IMR-90 (cell line): ENCODE measurements at regions of chr3 and their contacts with region 1.

Region 1: DNA sequence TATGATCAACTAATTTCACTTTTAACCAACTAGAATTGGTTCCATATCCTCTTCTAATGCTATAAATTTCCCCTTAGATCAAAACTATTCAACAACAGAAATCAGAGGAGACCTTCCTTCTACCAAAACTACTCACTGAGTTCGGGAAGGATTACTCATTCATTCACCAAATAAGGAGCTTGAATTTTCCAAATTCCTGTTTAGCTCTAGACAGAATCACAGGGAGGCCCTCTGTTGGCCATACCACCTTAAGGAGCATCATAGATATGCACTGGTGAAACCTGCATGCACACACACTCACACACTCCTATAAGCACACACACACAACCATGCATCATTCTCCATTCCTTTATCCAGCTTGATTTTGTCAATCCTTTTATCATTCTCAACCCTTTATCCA is 49.0 kb downstream of the SUCLG2 start:
- DNase-seq: peak; percentile 83
- ATAC-seq: peak; percentile 95
- H3K4me3 ChIP-seq: no peak overlapping the region
- H3K27ac ChIP-seq: no peak overlapping the region
- H3K4me1 ChIP-seq: no peaks in the 10 kb centered on the region; the same call in 1 of the 2 replicates
- H3K27me3 ChIP-seq: no peaks in the 10 kb centered on the region
- CTCF ChIP-seq: peak; percentile 57
- POLR2A ChIP-seq: no peak
- RAD21 ChIP-seq: peak; percentile 54

Region 2: GRCh38 chr3:67635257-67635656 is 29.9 kb after region 1 on chr3:
- CTCF ChIA-PET with region 1: no interaction called
- POLR2A ChIA-PET with region 1: no interaction called
- dilution Hi-C with region 1: no loop called
- in situ Hi-C with region 1: no loop called
- intact Hi-C with region 1: loop called (anchors 1 kb)
- DNase-seq: peak; percentile 96
- ATAC-seq: peak; percentile 84
- H3K4me3 ChIP-seq: no peak overlapping the region
- H3K27ac ChIP-seq: peak overlapping the region; percentile 39; the same call in 1 of the 2 replicates
- H3K4me1 ChIP-seq: peaks cover 16% of the 10 kb centered on the region
- H3K27me3 ChIP-seq: no peaks in the 10 kb centered on the region
- CTCF ChIP-seq: no peak
- POLR2A ChIP-seq: 0 out of 2 replicates have a peak, but pooled peaks have one; percentile 11
- RAD21 ChIP-seq: no peak; the same call in 1 of the 2 replicates